ENCODE measurements at regions of chr11 and their contacts with region 1.

Region 1: GRCh38 chr11:18634140-18635032 is at the start of gene SPTY2D1:
- DNase-seq: peak; percentile 97
- H3K4me3 Mint-ChIP-seq: peak within 1 kb of the TSS; percentile 82
- H3K27ac Mint-ChIP-seq: peak within 1 kb of the TSS; percentile 95
- H3K4me1 Mint-ChIP-seq: no peaks in the 10 kb centered on the region
- H3K27me3 Mint-ChIP-seq: no peaks in the 10 kb centered on the region
- CTCF ChIP-seq: no peak
- total RNA-seq, gene SPTY2D1: 32.1 and 37.5 TPM in 2 replicates

Region 2: GRCh38 chr11:17978553-17979287 is 655.7 kb before region 1 on chr11:
- CTCF ChIA-PET with region 1: no interaction called
- intact Hi-C with region 1: no loop called
- DNase-seq: peak; percentile 69
- H3K4me3 Mint-ChIP-seq: no peak overlapping the region
- H3K27ac Mint-ChIP-seq: no peak overlapping the region
- H3K4me1 Mint-ChIP-seq: peaks cover 2% of the 10 kb centered on the region
- H3K27me3 Mint-ChIP-seq: no peaks in the 10 kb centered on the region
- CTCF ChIP-seq: peak; percentile 59

Region 3: GRCh38 chr11:18492888-18493287 is 141.5 kb before region 1 on chr11:
- CTCF ChIA-PET with region 1: no interaction called
- intact Hi-C with region 1: no loop called
- DNase-seq: no peak
- H3K4me3 Mint-ChIP-seq: peak overlapping the region; percentile 33
- H3K27ac Mint-ChIP-seq: peak overlapping the region; percentile 19
- H3K4me1 Mint-ChIP-seq: peaks cover 45% of the 10 kb centered on the region
- H3K27me3 Mint-ChIP-seq: no peaks in the 10 kb centered on the region
- CTCF ChIP-seq: no peak

Region 4: GRCh38 chr11:18721561-18722292 is 87.3 kb after region 1 on chr11:
- CTCF ChIA-PET with region 1: interaction called, 7 read pairs
- intact Hi-C with region 1: loop called (anchors 10 kb)
- DNase-seq: peak; percentile 76
- H3K4me3 Mint-ChIP-seq: peak overlapping the region; percentile 90
- H3K27ac Mint-ChIP-seq: peak overlapping the region; percentile 10
- H3K4me1 Mint-ChIP-seq: peaks cover 16% of the 10 kb centered on the region
- H3K27me3 Mint-ChIP-seq: peaks cover 22% of the 10 kb centered on the region
- CTCF ChIP-seq: peak; percentile 75

Region 5: GRCh38 chr11:19060629-19061028 is 426.2 kb after region 1 on chr11 and contains the start of gene MRGPRX2:
- CTCF ChIA-PET with region 1: no interaction called
- intact Hi-C with region 1: no loop called
- DNase-seq: no peak
- H3K4me3 Mint-ChIP-seq: no peak within 1 kb of the TSS
- H3K27ac Mint-ChIP-seq: no peak within 1 kb of the TSS
- H3K4me1 Mint-ChIP-seq: no peaks in the 10 kb centered on the region
- H3K27me3 Mint-ChIP-seq: peaks cover 99% of the 10 kb centered on the region
- CTCF ChIP-seq: no peak
- total RNA-seq, gene MRGPRX2: not detected in 2 replicates

Region 6: GRCh38 chr11:19145319-19145718 is 510.9 kb after region 1 on chr11:
- CTCF ChIA-PET with region 1: no interaction called
- intact Hi-C with region 1: no loop called
- DNase-seq: no peak
- H3K4me3 Mint-ChIP-seq: no peak overlapping the region
- H3K27ac Mint-ChIP-seq: no peak overlapping the region
- H3K4me1 Mint-ChIP-seq: no peaks in the 10 kb centered on the region
- H3K27me3 Mint-ChIP-seq: no peaks in the 10 kb centered on the region
- CTCF ChIP-seq: no peak

Measured in Calu3 (cell line).